CD4-positive, alpha-beta memory T cell (primary cell): ENCODE measurements at regions of chr12 and their contacts with region 1.

Region 1: GRCh38 chr12:122159882-122160281 is 14.1 kb downstream of the IL31 start:
- DNase-seq: no peak
- H3K4me3 ChIP-seq: no peak overlapping the region
- H3K4me3 Mint-ChIP-seq: no peak overlapping the region
- H3K27ac ChIP-seq: no peak overlapping the region
- H3K27ac Mint-ChIP-seq: peak overlapping the region in 1 of 7 donors; percentile 7
- H3K4me1 ChIP-seq: peaks cover 4% of the 10 kb centered on the region
- H3K4me1 Mint-ChIP-seq: peaks cover 0 to 4% (median 3%) of the 10 kb centered on the region in 4 donors
- H3K27me3 ChIP-seq: no peaks in the 10 kb centered on the region
- H3K27me3 Mint-ChIP-seq: peaks cover 0 to 3% of the 10 kb centered on the region in 2 donors

Region 2: DNA sequence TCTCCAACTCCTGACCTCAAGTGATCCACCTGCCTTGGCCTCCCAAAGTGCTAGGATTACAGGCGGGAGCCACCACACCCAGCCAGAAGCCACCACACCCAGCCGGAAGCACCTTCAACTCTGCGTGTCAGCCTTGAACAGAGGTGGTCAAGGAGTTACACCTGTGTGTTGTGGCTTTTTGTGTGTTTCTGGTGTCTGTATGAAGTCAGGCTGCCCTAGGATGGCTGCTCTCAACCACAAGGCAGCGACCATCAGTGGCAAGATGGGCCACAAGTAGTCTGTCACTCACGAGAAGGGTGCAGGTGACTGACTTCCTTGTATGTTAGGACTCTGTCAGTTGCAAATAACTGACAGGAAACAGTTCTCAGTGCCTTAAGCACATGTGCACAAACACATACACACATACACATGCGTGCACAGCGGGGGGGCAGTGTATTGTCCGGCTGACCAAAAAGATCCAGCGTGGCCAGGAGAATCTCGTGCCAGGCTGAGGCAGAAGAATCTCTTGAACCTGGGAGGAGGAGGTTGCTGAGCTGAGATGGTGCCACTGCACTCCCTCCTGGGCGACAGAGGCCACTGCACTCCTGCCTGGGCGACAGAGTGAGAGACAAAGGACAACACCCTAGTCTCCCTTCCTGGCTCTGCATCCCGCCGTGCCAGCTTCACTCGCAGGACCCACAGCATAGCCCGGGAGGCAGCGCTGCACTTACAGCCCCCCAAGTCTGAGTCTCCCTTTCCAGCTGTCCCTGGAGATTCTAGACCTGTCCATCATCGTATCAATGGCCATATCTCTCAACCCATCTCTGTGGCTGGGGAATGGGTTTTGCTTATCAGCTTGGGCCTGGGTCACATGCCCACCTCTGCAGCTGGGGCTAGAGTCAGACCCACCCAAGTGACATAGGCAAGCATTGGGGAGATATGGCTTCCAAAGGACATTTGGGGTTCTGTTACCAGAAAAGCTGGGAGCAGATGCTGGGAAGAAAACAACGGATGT is 936.3 kb before region 1 on chr12:
- CTCF ChIA-PET with region 1: no interaction called
- POLR2A ChIA-PET with region 1: no interaction called
- intact Hi-C with region 1: no loop called
- DNase-seq: peak; percentile 34 to 64 (median 53)
- H3K4me3 ChIP-seq: peak overlapping the region in 1 of 2 donors; percentile 0
- H3K4me3 Mint-ChIP-seq: peak overlapping the region in 7 of 8 donors; percentile 19 to 84 (median 72)
- H3K27ac ChIP-seq: peak overlapping the region; percentile 47
- H3K27ac Mint-ChIP-seq: peak overlapping the region; percentile 86 to 97 (median 95)
- H3K4me1 ChIP-seq: peaks cover 52% of the 10 kb centered on the region
- H3K4me1 Mint-ChIP-seq: peaks cover 32 to 61% (median 44%) of the 10 kb centered on the region in 4 donors
- H3K27me3 ChIP-seq: no peaks in the 10 kb centered on the region
- H3K27me3 Mint-ChIP-seq: no peaks in the 10 kb centered on the region

Region 3: GRCh38 chr12:122225683-122226407 is 66.0 kb after region 1 on chr12 and contains the start of gene DIABLO:
- CTCF ChIA-PET with region 1: no interaction called
- POLR2A ChIA-PET with region 1: no interaction called
- intact Hi-C with region 1: no loop called
- DNase-seq: peak; percentile 100
- H3K4me3 ChIP-seq: peak within 1 kb of the TSS; percentile 63 to 76
- H3K4me3 Mint-ChIP-seq: peak within 1 kb of the TSS; percentile 88 to 93 (median 91)
- H3K27ac ChIP-seq: peak within 1 kb of the TSS; percentile 99
- H3K27ac Mint-ChIP-seq: peak within 1 kb of the TSS; percentile 90 to 98 (median 96)
- H3K4me1 ChIP-seq: peaks cover 36% of the 10 kb centered on the region
- H3K4me1 Mint-ChIP-seq: peaks cover 25 to 56% (median 39%) of the 10 kb centered on the region in 4 donors
- H3K27me3 ChIP-seq: no peaks in the 10 kb centered on the region
- H3K27me3 Mint-ChIP-seq: no peaks in the 10 kb centered on the region
- total RNA-seq, gene DIABLO: 40.0 to 44.1 TPM

Region 4: DNA sequence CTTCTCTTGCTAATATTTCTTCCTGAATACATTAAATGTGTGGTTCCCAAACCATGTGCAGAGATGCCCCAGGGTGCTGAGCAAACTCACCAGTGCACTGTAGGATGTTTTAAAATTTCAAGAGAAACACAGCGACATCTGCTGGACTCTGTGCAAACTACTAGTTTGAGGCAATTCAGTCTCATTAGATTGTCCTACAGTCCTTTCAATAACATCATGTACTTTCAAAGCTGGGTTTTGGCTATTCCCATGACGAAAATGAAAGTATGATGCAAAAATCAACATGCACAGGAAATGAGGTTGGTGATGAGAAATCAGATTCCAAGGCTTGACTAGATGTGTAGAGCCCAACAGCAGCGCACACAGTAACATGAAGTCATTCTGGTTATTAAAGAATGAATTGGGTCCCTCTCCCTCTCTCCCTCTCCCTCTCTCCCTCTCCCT is 196.3 kb after region 1 on chr12:
- CTCF ChIA-PET with region 1: interaction called, 4 read pairs
- POLR2A ChIA-PET with region 1: no interaction called
- intact Hi-C with region 1: loop called (anchors 1 kb)
- DNase-seq: peak in 4 of 5 donors; percentile 38 to 54 (median 44)
- H3K4me3 ChIP-seq: no peak overlapping the region
- H3K4me3 Mint-ChIP-seq: no peak overlapping the region
- H3K27ac ChIP-seq: no peak overlapping the region
- H3K27ac Mint-ChIP-seq: peak overlapping the region in 4 of 7 donors; percentile 5 to 87 (median 36)
- H3K4me1 ChIP-seq: no peaks in the 10 kb centered on the region
- H3K4me1 Mint-ChIP-seq: peaks cover 0 to 6% (median 3%) of the 10 kb centered on the region in 4 donors
- H3K27me3 ChIP-seq: no peaks in the 10 kb centered on the region
- H3K27me3 Mint-ChIP-seq: no peaks in the 10 kb centered on the region